GM12878 (cell line): ENCODE measurements at regions of chr3 and their contacts with region 1.

Region 1: DNA sequence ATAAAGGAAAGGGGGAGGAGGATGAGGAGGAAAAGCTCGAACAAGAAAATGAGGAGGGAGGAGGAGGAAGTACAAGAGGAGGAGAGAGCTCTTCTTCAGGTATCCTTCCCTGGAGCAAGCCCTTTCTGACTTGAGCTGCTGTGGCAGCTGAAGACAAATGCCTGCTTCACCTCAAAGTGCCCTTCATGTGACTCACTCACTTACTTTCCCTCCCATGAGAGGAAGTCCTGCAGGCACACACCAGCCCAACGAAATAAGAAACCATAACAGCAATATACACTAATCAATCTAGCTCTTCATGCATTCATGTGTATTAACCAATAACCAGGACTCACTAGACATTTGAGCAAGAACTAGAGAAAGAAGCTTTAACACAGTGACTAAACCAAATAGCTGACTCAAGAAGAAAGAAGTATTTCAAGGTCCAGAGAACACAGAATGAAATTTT is 251.9 kb downstream of the IGSF11 start:
- DNase-seq: peak; percentile 90
- ATAC-seq: peak; percentile 98
- H3K4me3 ChIP-seq: no peak overlapping the region; the same call in 1 of the 2 replicates
- H3K27ac ChIP-seq: peak overlapping the region; percentile 60
- H3K4me1 ChIP-seq: peaks cover 16% of the 10 kb centered on the region
- H3K27me3 ChIP-seq: no peaks in the 10 kb centered on the region
- CTCF ChIP-seq: no peak
- EP300 ChIP-seq: peak; percentile 78 to 81; a peak in 2 of 4 replicates
- POLR2A ChIP-seq: 0 out of 2 replicates have a peak, but pooled peaks have one; percentile 18
- RAD21 ChIP-seq: no peak

Region 2: GRCh38 chr3:118478706-118479276 is 304.0 kb before region 1 on chr3:
- CTCF ChIA-PET with region 1: no interaction called
- POLR2A ChIA-PET with region 1: no interaction called
- RAD21 ChIA-PET with region 1: no interaction called
- SMC1A ChIA-PET with region 1: no interaction called
- in situ Hi-C with region 1: no loop called
- intact Hi-C with region 1: loop called (anchors 5 kb)
- DNase-seq: no peak
- ATAC-seq: peak; percentile 10
- H3K4me3 ChIP-seq: no peak overlapping the region
- H3K27ac ChIP-seq: no peak overlapping the region; the same call in 1 of the 2 replicates
- H3K4me1 ChIP-seq: peaks cover 7% of the 10 kb centered on the region
- H3K27me3 ChIP-seq: no peaks in the 10 kb centered on the region
- CTCF ChIP-seq: no peak
- EP300 ChIP-seq: no peak
- POLR2A ChIP-seq: no peak
- RAD21 ChIP-seq: no peak

Region 3: GRCh38 chr3:118641608-118642007 is 141.2 kb before region 1 on chr3:
- CTCF ChIA-PET with region 1: no interaction called
- POLR2A ChIA-PET with region 1: no interaction called
- RAD21 ChIA-PET with region 1: no interaction called
- SMC1A ChIA-PET with region 1: no interaction called
- in situ Hi-C with region 1: no loop called
- intact Hi-C with region 1: no loop called
- DNase-seq: no peak
- ATAC-seq: peak; percentile 72
- H3K4me3 ChIP-seq: no peak overlapping the region
- H3K27ac ChIP-seq: no peak overlapping the region
- H3K4me1 ChIP-seq: no peaks in the 10 kb centered on the region
- H3K27me3 ChIP-seq: no peaks in the 10 kb centered on the region
- CTCF ChIP-seq: no peak
- EP300 ChIP-seq: no peak
- POLR2A ChIP-seq: no peak
- RAD21 ChIP-seq: no peak

Region 4: GRCh38 chr3:118766306-118766669 is 16.5 kb before region 1 on chr3:
- CTCF ChIA-PET with region 1: interaction called, 9 read pairs
- POLR2A ChIA-PET with region 1: interaction called, 14 read pairs
- RAD21 ChIA-PET with region 1: interaction called, 12 read pairs
- SMC1A ChIA-PET with region 1: interaction called, 34 read pairs
- in situ Hi-C with region 1: no loop called
- intact Hi-C with region 1: no loop called
- DNase-seq: no peak
- ATAC-seq: peak; percentile 76
- H3K4me3 ChIP-seq: no peak overlapping the region
- H3K27ac ChIP-seq: no peak overlapping the region
- H3K4me1 ChIP-seq: no peaks in the 10 kb centered on the region
- H3K27me3 ChIP-seq: no peaks in the 10 kb centered on the region
- CTCF ChIP-seq: no peak
- EP300 ChIP-seq: no peak
- POLR2A ChIP-seq: no peak
- RAD21 ChIP-seq: no peak

Region 5: GRCh38 chr3:118801899-118802298 is 19.1 kb after region 1 on chr3:
- CTCF ChIA-PET with region 1: interaction called, 9 read pairs
- POLR2A ChIA-PET with region 1: interaction called, 12 read pairs
- RAD21 ChIA-PET with region 1: interaction called, 207 read pairs
- SMC1A ChIA-PET with region 1: interaction called, 394 read pairs
- in situ Hi-C with region 1: no loop called
- intact Hi-C with region 1: no loop called
- DNase-seq: no peak
- ATAC-seq: no peak
- H3K4me3 ChIP-seq: no peak overlapping the region
- H3K27ac ChIP-seq: no peak overlapping the region
- H3K4me1 ChIP-seq: no peaks in the 10 kb centered on the region; the same call in 1 of the 2 replicates
- H3K27me3 ChIP-seq: no peaks in the 10 kb centered on the region
- CTCF ChIP-seq: no peak
- EP300 ChIP-seq: no peak
- POLR2A ChIP-seq: no peak
- RAD21 ChIP-seq: no peak

Region 6: GRCh38 chr3:118817748-118818165 is 35.0 kb after region 1 on chr3:
- CTCF ChIA-PET with region 1: interaction called, 6 read pairs
- POLR2A ChIA-PET with region 1: interaction called, 3 read pairs
- RAD21 ChIA-PET with region 1: interaction called, 207 read pairs
- SMC1A ChIA-PET with region 1: interaction called, 394 read pairs
- in situ Hi-C with region 1: no loop called
- intact Hi-C with region 1: no loop called
- DNase-seq: no peak
- ATAC-seq: peak; percentile 81
- H3K4me3 ChIP-seq: no peak overlapping the region
- H3K27ac ChIP-seq: no peak overlapping the region
- H3K4me1 ChIP-seq: no peaks in the 10 kb centered on the region
- H3K27me3 ChIP-seq: no peaks in the 10 kb centered on the region
- CTCF ChIP-seq: peak; percentile 79 to 92 (median 91); a peak in 5 of 6 replicates
- EP300 ChIP-seq: no peak
- POLR2A ChIP-seq: no peak
- RAD21 ChIP-seq: peak; percentile 93